ENCODE measurements at regions of chr22 and their contacts with region 1.

Region 1: DNA sequence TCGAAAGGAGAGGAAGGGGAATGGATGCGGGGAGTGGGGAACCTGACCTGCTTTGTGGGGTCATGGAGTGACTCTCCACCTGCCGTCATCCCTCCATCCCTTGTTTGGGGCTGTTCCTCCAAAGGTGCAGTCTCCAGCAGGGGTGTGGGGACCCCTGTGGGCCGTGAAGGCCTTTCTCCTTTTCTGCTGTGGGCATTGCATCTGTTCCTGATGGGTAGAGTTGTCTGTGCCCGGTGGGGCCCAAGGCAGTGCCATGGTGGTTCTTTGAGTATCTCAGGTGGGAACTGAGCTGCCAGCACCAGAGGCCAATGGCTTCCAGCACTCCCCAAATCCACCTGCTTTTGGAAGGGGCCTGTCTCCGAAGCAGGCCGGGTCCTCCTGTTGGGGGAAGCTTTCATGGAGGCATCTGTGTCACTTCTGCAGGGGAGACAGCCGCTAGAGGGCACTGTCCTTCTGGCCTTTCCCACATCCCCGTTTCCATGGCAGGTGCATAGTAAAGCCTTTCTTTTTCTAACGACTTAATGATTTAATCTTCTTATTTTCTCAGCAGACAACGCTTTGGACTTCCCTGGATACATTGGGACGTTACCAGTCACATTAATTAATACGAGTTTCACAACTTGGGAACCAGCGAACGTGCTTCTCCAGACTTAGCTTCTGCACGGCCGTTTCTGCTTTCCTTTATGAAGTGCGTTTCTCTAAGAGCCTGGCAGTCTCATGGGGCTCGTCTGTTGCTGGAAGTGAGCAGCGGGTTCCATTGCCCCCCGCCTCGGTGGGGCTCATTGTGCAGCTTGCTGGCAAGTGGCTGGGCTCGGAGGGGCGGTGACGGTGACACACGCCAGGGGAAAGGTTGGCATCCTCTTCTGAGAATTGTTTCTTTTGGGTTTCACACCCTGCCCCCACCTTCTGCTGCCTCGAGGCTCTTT is 57.1 kb downstream of the PARVB start:
- DNase-seq: peak; percentile 59 to 84
- ATAC-seq: peak in 2 of 3 donors; percentile 69 to 80
- H3K4me3 ChIP-seq: no peak overlapping the region
- H3K4me3 Mint-ChIP-seq: no peak overlapping the region
- H3K27ac ChIP-seq: no peak overlapping the region
- H3K27ac Mint-ChIP-seq: no peak overlapping the region
- H3K4me1 ChIP-seq: no peaks in the 10 kb centered on the region
- H3K4me1 Mint-ChIP-seq: no peaks in the 10 kb centered on the region
- H3K27me3 ChIP-seq: no peaks in the 10 kb centered on the region
- H3K27me3 Mint-ChIP-seq: no peaks in the 10 kb centered on the region
- CTCF ChIP-seq: peak; percentile 85

Region 2: GRCh38 chr22:43976861-43977795 is 104.1 kb before region 1 on chr22:
- intact Hi-C with region 1: no loop called
- DNase-seq: no peak
- ATAC-seq: no peak
- H3K4me3 ChIP-seq: no peak overlapping the region
- H3K4me3 Mint-ChIP-seq: no peak overlapping the region
- H3K27ac ChIP-seq: no peak overlapping the region
- H3K27ac Mint-ChIP-seq: no peak overlapping the region
- H3K4me1 ChIP-seq: no peaks in the 10 kb centered on the region
- H3K4me1 Mint-ChIP-seq: peaks cover 0 to 3% of the 10 kb centered on the region in 2 donors
- H3K27me3 ChIP-seq: no peaks in the 10 kb centered on the region
- H3K27me3 Mint-ChIP-seq: no peaks in the 10 kb centered on the region
- CTCF ChIP-seq: no peak

Region 3: DNA sequence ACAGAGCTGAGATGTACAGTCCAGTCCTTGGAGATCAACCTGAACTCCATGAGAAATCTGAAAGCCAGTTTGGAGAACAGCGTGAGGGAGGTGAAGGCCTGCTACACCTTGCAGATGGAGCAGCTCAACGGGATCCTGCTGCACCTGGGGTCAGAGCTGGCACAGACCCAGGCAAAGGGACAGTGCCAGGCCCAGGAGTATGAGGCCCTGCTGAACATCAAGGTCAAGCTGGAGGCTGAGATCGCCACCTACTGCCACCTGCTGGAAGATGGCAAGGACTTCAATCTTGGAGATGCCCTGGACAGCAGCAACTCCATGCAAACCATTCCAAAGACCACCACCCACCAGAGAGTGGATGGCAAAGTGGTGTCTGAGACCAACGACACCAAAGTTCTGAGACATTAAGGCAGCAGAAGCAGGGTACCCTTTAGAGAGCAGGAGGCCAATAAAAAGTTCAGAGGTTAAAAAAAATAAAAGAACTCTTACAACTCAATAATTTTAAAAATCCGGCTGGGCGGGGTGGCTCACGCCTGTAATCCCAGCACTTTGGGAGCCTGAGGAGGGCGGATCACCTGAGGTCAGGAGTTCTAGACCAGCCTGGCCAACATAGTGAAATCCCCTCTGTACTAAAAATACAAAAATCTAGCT is 486.8 kb after region 1 on chr22:
- intact Hi-C with region 1: loop called (anchors 1 kb)
- DNase-seq: peak; percentile 35 to 72
- ATAC-seq: no peak
- H3K4me3 ChIP-seq: no peak overlapping the region
- H3K4me3 Mint-ChIP-seq: no peak overlapping the region
- H3K27ac ChIP-seq: no peak overlapping the region
- H3K27ac Mint-ChIP-seq: no peak overlapping the region
- H3K4me1 ChIP-seq: no peaks in the 10 kb centered on the region
- H3K4me1 Mint-ChIP-seq: no peaks in the 10 kb centered on the region
- H3K27me3 ChIP-seq: no peaks in the 10 kb centered on the region
- H3K27me3 Mint-ChIP-seq: peaks cover 6 to 8% of the 10 kb centered on the region in 2 donors
- CTCF ChIP-seq: peak; percentile 73

Region 4: DNA sequence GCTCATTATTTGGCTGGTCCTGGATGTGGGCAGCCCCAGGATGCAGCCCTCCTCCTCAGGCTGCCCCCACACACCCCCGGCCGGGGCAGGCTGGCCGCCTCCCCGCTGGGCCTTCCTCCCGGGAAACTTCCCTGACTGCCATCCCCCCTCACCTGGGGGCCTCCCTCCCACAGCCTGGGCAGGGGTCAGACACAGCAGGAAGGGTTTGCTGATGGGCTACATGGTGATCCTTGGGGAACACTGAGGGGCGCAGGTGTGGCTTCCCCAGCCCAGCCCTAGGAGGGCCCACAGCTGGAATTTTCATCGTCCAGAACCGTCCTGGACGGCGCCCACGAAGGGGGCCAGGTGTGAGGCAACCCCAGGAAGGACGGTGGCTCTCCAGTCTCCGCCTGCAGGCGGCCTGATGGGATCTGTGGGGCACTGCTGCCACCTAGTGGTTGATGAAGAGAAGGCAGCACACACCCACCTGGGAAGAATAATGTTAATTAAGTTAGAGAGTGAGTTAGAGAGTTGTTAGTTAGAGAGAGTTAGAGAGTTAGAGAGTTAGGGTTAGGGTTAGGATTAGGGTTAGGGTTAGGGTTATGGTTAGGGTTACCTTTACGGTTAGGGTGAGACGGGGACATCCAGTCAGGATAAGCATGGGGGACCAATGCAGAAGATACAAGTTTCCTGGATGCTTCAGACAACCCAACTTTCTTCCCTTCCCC is 544.9 kb after region 1 on chr22:
- intact Hi-C with region 1: loop called (anchors 1 kb)
- DNase-seq: peak; percentile 76 to 91
- ATAC-seq: peak; percentile 84 to 87 (median 86)
- H3K4me3 ChIP-seq: no peak overlapping the region
- H3K4me3 Mint-ChIP-seq: no peak overlapping the region
- H3K27ac ChIP-seq: no peak overlapping the region
- H3K27ac Mint-ChIP-seq: peak overlapping the region in 1 of 2 donors; percentile 12
- H3K4me1 ChIP-seq: peaks cover 9% of the 10 kb centered on the region
- H3K4me1 Mint-ChIP-seq: peaks cover 7 to 18% of the 10 kb centered on the region in 2 donors
- H3K27me3 ChIP-seq: no peaks in the 10 kb centered on the region
- H3K27me3 Mint-ChIP-seq: peaks cover 0 to 2% of the 10 kb centered on the region in 2 donors
- CTCF ChIP-seq: peak; percentile 99

Measured in natural killer cell (primary cell).